ENCODE measurements at regions of chr7 and their contacts with region 1.

Region 1: GRCh38 chr7:113301141-113301540 is 182.8 kb upstream of the SMIM30 start:
- DNase-seq: no peak
- H3K4me3 Mint-ChIP-seq: no peak overlapping the region
- H3K27ac Mint-ChIP-seq: no peak overlapping the region
- H3K4me1 Mint-ChIP-seq: no peaks in the 10 kb centered on the region
- H3K27me3 Mint-ChIP-seq: no peaks in the 10 kb centered on the region

Region 2: DNA sequence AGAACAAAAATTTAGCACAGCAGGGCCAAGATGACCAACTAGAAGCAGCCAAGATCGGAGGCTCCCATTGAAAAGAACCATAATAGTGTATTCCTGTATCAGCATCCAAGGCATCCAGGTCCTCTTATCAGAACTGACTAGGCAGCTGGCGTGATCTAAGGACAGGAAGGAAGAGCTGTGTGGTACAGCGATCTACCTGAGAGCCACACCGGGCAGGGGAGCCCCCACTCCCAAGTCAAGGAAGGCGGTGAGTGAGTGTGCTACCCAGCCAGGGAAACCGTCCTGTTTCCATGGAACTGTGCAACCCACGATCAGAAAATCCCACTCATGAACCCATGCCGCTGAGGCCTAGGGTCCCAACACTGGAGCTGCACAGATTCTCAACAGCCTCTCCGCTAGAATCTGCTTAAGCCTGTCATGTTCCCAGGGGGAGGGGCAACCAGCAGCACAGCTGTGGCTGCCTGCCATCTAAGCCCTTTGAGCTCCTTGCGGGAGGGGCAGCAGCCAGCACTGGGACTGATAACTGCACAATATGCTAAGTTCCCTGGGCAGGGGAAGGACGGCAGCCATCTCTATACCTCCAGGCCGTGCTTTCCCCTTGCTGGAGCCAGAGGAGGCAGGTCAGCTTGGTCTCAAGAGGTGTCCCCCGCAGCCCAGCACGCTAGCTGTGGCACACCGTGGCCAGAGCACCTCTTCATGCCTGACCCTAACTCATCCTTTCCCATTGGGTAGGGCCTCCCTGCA is 30.2 kb after region 1 on chr7:
- intact Hi-C with region 1: loop called (anchors 1 kb)
- DNase-seq: no peak
- H3K4me3 Mint-ChIP-seq: no peak overlapping the region
- H3K27ac Mint-ChIP-seq: no peak overlapping the region
- H3K4me1 Mint-ChIP-seq: no peaks in the 10 kb centered on the region
- H3K27me3 Mint-ChIP-seq: no peaks in the 10 kb centered on the region

Region 3: GRCh38 chr7:113349339-113349738 is 48.2 kb after region 1 on chr7:
- intact Hi-C with region 1: no loop called
- DNase-seq: no peak
- H3K4me3 Mint-ChIP-seq: no peak overlapping the region
- H3K27ac Mint-ChIP-seq: no peak overlapping the region
- H3K4me1 Mint-ChIP-seq: no peaks in the 10 kb centered on the region
- H3K27me3 Mint-ChIP-seq: no peaks in the 10 kb centered on the region

Region 4: GRCh38 chr7:113421696-113422330 is 120.7 kb after region 1 on chr7:
- intact Hi-C with region 1: no loop called
- DNase-seq: peak; percentile 91
- H3K4me3 Mint-ChIP-seq: no peak overlapping the region
- H3K27ac Mint-ChIP-seq: no peak overlapping the region
- H3K4me1 Mint-ChIP-seq: peaks cover 5% of the 10 kb centered on the region
- H3K27me3 Mint-ChIP-seq: no peaks in the 10 kb centered on the region